ENCODE measurements at regions of chr19 and their contacts with region 1.

Region 1: GRCh38 chr19:6218491-6219162 is 61.1 kb downstream of the MLLT1 start:
- DNase-seq: peak; percentile 92 to 94
- H3K4me3 ChIP-seq: no peak overlapping the region
- H3K27ac ChIP-seq: no peak overlapping the region
- H3K4me1 ChIP-seq: peaks cover 4 to 31% (median 14%) of the 10 kb centered on the region in 4 donors
- H3K27me3 ChIP-seq: no peaks in the 10 kb centered on the region
- CTCF ChIP-seq: peak; percentile 94 to 99

Region 2: GRCh38 chr19:6185835-6186834 is 32.5 kb before region 1 on chr19:
- intact Hi-C with region 1: no loop called
- DNase-seq: peak in 1 of 2 donors; percentile 34
- H3K4me3 ChIP-seq: no peak overlapping the region
- H3K27ac ChIP-seq: no peak overlapping the region
- H3K4me1 ChIP-seq: peaks cover 0 to 8% (median 2%) of the 10 kb centered on the region in 4 donors
- H3K27me3 ChIP-seq: peaks cover 0 to 8% of the 10 kb centered on the region in 2 donors
- CTCF ChIP-seq: no peak

Region 3: DNA sequence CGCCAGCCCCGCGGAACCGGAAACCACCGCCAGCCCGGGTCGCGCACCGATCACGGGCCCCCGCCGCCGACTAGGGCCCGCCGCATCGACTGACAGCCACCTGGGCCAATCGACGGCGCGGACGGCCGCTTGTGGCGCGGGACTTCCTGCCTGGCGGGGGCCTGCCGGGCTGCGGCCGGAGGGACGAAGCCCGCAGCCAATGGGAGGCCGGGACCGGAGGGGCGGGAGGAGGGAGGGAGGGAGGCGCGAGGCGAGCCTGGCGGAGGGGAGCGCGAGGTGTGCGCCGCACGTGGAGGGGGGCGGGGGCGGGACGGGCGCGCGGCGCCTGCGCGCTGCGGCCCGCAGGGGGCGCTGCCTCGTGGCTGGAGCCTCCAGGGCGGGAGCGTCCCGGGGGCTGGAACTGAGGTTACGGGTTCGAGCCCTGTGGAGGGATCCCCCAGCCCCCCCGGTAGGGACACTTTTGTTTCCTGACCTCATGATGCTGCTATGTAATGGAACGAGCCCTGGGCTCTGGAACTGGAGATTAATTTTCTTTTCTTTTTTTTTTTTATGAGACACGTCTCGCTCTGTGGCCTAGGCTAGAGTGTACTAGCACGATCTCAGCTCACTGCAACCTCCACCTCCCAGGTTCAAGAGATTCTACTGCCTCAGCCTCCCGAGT is 61.4 kb after region 1 on chr19 and contains the start of gene MLLT1:
- intact Hi-C with region 1: loop called (anchors 5 kb)
- DNase-seq: peak; percentile 93 to 99
- H3K4me3 ChIP-seq: peak within 1 kb of the TSS; percentile 80 to 91
- H3K27ac ChIP-seq: peak within 1 kb of the TSS; percentile 79 to 82
- H3K4me1 ChIP-seq: peaks cover 5 to 48% (median 41%) of the 10 kb centered on the region in 4 donors
- H3K27me3 ChIP-seq: no peaks in the 10 kb centered on the region
- CTCF ChIP-seq: peak; percentile 51 to 80

Region 4: GRCh38 chr19:6298413-6298812 is 79.8 kb after region 1 on chr19:
- intact Hi-C with region 1: loop called (anchors 2 kb)
- DNase-seq: no peak
- H3K4me3 ChIP-seq: no peak overlapping the region
- H3K27ac ChIP-seq: no peak overlapping the region
- H3K4me1 ChIP-seq: no peaks in the 10 kb centered on the region
- H3K27me3 ChIP-seq: peaks cover 0 to 17% of the 10 kb centered on the region in 2 donors
- CTCF ChIP-seq: no peak

Region 5: DNA sequence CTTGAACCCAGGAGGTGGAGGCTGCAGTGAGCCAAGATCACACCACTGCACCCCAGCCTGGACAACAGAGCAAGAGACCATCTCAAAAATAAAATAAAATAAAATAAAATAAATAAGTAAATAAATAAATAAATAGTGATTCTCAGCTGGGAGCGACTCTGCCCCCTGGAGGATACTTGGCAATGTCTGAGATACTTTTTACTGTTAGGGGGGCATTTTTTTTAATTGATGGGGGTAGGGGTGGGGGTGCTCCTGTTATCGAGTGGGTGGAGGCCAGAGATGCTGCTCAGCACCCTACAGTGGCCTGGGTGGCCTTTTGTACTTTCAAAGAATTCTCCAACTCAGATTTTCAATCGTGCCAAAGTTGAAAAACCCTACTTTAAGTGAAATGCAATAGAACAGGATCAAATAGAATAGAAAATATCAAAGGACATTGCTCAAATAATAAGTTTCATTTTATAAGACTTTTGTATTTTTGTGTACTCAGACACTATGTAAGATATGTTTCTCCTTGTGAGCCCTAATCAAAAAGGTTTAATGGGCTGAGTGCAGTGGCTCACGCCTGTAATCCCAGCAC is 135.6 kb after region 1 on chr19:
- intact Hi-C with region 1: loop called (anchors 2 kb)
- DNase-seq: no peak
- H3K4me3 ChIP-seq: no peak overlapping the region
- H3K27ac ChIP-seq: no peak overlapping the region
- H3K4me1 ChIP-seq: no peaks in the 10 kb centered on the region
- H3K27me3 ChIP-seq: no peaks in the 10 kb centered on the region
- CTCF ChIP-seq: peak in 1 of 2 experiments; percentile 39